Left colon (tissue), 2 donors: ENCODE measurements at regions of chr1 and their contacts with region 1.

Region 1: GRCh38 chr1:2381741-2382620 is 9.4 kb downstream of the MORN1 start:
- DNase-seq: peak; percentile 74 to 83
- ATAC-seq: peak; percentile 92

Region 2: GRCh38 chr1:2194898-2195673 is 186.9 kb before region 1 on chr1:
- intact Hi-C with region 1: loop called (anchors 5 kb)
- DNase-seq: peak; percentile 92 to 93
- ATAC-seq: peak; percentile 67